CD8-positive, alpha-beta T cell (primary cell): ENCODE measurements at regions of chr12 and their contacts with region 1.

Region 1: DNA sequence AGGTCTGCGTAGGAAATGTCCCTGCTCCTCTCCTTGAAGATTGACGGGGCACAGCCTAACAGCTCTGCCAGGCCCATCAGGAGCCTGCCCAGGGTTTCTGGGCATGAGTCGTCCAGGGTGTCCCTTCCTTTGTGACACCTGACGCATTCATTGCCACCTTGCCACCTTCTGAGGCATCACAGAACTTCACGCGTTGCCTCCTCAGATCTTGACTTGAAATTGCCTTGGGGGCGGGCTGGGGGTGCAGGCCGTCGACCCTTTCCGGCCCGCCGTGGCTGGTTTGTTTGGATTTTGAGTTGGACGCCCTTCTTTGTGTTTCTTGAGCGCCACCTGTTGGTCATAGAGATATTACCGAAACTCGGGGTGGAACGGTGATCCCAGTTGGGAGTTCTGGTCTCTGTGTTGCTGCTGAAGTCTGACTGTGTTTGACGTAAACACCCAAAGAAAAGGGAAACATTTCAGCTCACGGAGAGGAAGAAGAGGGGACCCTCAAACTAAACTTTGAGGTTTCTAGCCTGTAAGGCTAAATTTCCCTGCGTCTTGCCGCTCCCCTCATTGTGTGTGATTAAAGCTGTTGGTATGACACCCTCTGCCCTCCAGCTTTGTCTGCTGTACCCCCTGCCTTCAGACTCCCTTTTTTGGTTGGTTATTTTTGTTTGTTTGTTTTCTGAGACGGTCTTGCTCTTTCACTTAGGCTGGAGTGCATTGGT is 44.6 kb downstream of the MLXIP start:
- DNase-seq: peak; percentile 48 to 82 (median 75)
- ATAC-seq: peak; percentile 77
- H3K4me3 ChIP-seq: no peak overlapping the region
- H3K4me3 Mint-ChIP-seq: peak overlapping the region; percentile 54
- H3K27ac ChIP-seq: no peak overlapping the region
- H3K27ac Mint-ChIP-seq: peak overlapping the region; percentile 90
- H3K4me1 ChIP-seq: peaks cover 36% of the 10 kb centered on the region
- H3K4me1 Mint-ChIP-seq: peaks cover 55% of the 10 kb centered on the region
- H3K27me3 ChIP-seq: no peaks in the 10 kb centered on the region
- H3K27me3 Mint-ChIP-seq: no peaks in the 10 kb centered on the region
- CTCF ChIP-seq: peak; percentile 87

Region 2: DNA sequence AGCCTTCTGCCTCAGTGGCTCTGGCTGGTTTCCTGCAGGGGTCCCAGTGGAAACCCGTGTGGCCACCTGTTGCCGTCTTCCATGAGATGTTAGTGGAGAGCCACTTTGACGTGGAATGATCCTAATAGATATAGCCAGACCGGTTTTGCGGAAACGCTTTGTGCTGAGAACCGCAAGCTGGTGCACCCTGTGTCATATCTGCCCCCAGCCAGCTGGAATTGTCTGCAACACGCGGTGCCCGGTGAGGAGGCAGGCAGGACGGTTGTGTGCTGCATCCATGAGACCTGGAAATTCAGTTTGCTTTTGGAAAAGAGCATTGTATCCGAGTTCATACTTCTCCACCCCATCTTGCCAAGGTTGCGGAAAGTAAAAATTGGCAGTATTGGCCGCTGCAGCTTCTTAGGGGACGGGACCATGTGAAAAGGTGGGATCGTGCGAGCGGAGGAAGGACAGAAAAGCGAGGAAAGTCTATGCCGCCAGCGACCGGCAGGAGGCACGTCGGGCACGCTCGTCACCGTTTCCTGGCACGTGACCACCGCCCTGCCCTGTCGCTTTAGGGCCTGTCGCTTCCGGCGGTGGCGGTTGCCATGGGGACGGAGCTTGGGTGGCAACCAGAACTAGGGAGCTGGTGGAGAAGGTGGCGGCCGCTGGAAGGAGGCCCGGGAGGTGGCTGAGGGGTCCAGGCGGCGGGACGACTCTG is 205.1 kb before region 1 on chr12 and contains the start of gene CFAP251:
- CTCF ChIA-PET with region 1: interaction called, 3 read pairs
- POLR2A ChIA-PET with region 1: no interaction called
- intact Hi-C with region 1: loop called in 1 of 2 experiments (anchors 10 kb)
- DNase-seq: peak; percentile 86 to 98 (median 97)
- ATAC-seq: peak; percentile 97
- H3K4me3 ChIP-seq: peak within 1 kb of the TSS; percentile 43 to 54
- H3K4me3 Mint-ChIP-seq: peak within 1 kb of the TSS; percentile 84
- H3K27ac ChIP-seq: peak within 1 kb of the TSS; percentile 54 to 84
- H3K27ac Mint-ChIP-seq: peak within 1 kb of the TSS; percentile 90
- H3K4me1 ChIP-seq: peaks cover 11% of the 10 kb centered on the region
- H3K4me1 Mint-ChIP-seq: peaks cover 12% of the 10 kb centered on the region
- H3K27me3 ChIP-seq: no peaks in the 10 kb centered on the region
- H3K27me3 Mint-ChIP-seq: no peaks in the 10 kb centered on the region
- CTCF ChIP-seq: peak; percentile 61
- total RNA-seq, gene CFAP251: 0.33 to 0.68 TPM

Region 3: DNA sequence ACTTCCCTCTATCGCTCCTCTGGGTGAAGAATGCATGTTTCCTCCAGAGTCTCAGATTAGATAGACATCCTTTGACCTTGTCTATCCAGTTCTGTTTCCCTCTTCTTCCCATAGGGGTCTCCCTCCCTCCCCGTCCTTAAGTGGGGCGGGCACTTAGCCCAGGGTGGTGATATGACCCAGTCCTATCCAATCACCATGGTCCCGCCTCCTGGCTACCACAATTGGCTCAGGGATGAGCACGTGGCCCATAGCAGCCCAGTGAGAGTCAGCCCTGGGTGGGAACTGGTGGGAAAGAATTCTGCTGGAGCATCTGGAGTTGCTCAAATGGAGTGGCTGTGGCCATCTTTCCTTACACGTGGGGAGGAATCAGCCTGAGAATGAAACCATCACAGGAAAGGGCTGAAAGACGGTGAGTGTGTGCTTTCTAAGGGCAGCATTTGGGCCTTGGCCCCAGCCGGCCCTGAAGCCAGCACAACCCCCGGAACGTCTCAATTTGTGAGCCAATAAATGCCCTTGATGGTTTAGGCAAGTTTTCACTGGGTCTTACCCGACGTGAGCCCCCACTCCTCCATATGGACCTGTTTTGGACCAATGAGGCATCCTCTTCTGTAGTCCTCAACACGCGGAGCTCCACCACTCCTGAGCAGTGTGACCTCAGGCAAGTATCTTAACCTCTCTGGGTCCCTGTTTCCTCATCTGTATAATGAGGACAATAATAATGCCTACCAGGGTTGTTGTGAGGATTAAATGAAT is 59.0 kb before region 1 on chr12:
- CTCF ChIA-PET with region 1: interaction called, 45 read pairs
- POLR2A ChIA-PET with region 1: no interaction called
- intact Hi-C with region 1: loop called in 1 of 2 experiments (anchors 5 kb)
- DNase-seq: peak in 5 of 9 experiments; percentile 21 to 61 (median 44)
- ATAC-seq: peak; percentile 84
- H3K4me3 ChIP-seq: no peak overlapping the region
- H3K4me3 Mint-ChIP-seq: no peak overlapping the region
- H3K27ac ChIP-seq: no peak overlapping the region
- H3K27ac Mint-ChIP-seq: no peak overlapping the region
- H3K4me1 ChIP-seq: peaks cover 16% of the 10 kb centered on the region
- H3K4me1 Mint-ChIP-seq: peaks cover 28% of the 10 kb centered on the region
- H3K27me3 ChIP-seq: no peaks in the 10 kb centered on the region
- H3K27me3 Mint-ChIP-seq: no peaks in the 10 kb centered on the region
- CTCF ChIP-seq: no peak

Region 4: DNA sequence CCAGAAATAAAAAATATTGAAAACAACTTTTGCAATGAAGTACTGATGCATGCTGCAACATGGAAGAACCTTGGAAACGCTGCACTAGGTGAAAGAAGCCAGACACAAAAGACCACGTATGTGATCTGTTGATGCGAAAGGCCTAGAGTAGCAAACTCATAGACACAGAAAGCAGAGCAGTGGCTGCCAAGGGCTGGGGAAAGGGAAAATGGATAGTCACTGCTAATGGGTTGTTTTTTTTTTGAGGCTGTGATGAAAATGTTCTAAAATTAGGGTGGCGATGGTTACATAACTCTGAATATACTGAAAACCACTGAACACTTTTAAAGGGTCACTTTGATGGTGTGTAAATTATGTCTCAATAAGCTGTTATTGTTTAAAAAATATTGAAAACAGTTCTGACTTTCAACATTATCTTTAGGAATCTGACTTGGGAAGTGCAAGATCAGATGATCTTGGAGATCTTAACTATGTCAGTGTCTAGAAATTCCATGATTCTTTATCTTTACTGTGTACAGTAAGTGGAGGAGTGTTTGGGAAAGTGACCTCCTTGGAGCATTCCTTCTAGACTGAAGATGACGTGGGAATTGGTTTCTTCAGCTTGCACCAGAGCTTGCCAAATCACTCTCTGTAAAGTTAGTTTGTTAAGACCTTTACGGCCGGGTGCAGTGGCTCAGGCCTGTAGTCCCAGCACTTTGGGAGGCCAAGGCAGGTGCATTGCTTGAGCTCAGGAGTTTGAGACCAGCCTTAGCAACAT is 32.3 kb before region 1 on chr12:
- CTCF ChIA-PET with region 1: interaction called, 50 read pairs
- POLR2A ChIA-PET with region 1: no interaction called
- intact Hi-C with region 1: no loop called
- DNase-seq: no peak
- ATAC-seq: no peak
- H3K4me3 ChIP-seq: no peak overlapping the region
- H3K4me3 Mint-ChIP-seq: peak overlapping the region; percentile 65
- H3K27ac ChIP-seq: no peak overlapping the region
- H3K27ac Mint-ChIP-seq: no peak overlapping the region
- H3K4me1 ChIP-seq: peaks cover 93% of the 10 kb centered on the region
- H3K4me1 Mint-ChIP-seq: peaks cover 42% of the 10 kb centered on the region
- H3K27me3 ChIP-seq: no peaks in the 10 kb centered on the region
- H3K27me3 Mint-ChIP-seq: no peaks in the 10 kb centered on the region
- CTCF ChIP-seq: no peak

Region 5: GRCh38 chr12:122107261-122107660 is 15.9 kb before region 1 on chr12:
- CTCF ChIA-PET with region 1: interaction called, 16 read pairs
- POLR2A ChIA-PET with region 1: no interaction called
- intact Hi-C with region 1: no loop called
- DNase-seq: no peak
- ATAC-seq: no peak
- H3K4me3 ChIP-seq: no peak overlapping the region
- H3K4me3 Mint-ChIP-seq: peak overlapping the region; percentile 9
- H3K27ac ChIP-seq: no peak overlapping the region
- H3K27ac Mint-ChIP-seq: peak overlapping the region; percentile 61
- H3K4me1 ChIP-seq: peaks cover 67% of the 10 kb centered on the region
- H3K4me1 Mint-ChIP-seq: peaks cover 75% of the 10 kb centered on the region
- H3K27me3 ChIP-seq: no peaks in the 10 kb centered on the region
- H3K27me3 Mint-ChIP-seq: no peaks in the 10 kb centered on the region
- CTCF ChIP-seq: no peak

Region 6: GRCh38 chr12:122190842-122191668 is 67.8 kb after region 1 on chr12:
- CTCF ChIA-PET with region 1: interaction called, 14 read pairs
- POLR2A ChIA-PET with region 1: no interaction called
- intact Hi-C with region 1: loop called in 1 of 2 experiments (anchors 2 kb)
- DNase-seq: peak; percentile 41 to 78 (median 68)
- ATAC-seq: peak; percentile 93
- H3K4me3 ChIP-seq: no peak overlapping the region
- H3K4me3 Mint-ChIP-seq: no peak overlapping the region
- H3K27ac ChIP-seq: no peak overlapping the region
- H3K27ac Mint-ChIP-seq: no peak overlapping the region
- H3K4me1 ChIP-seq: peaks cover 3% of the 10 kb centered on the region
- H3K4me1 Mint-ChIP-seq: peaks cover 2% of the 10 kb centered on the region
- H3K27me3 ChIP-seq: no peaks in the 10 kb centered on the region
- H3K27me3 Mint-ChIP-seq: peaks cover 3% of the 10 kb centered on the region
- CTCF ChIP-seq: peak; percentile 69